ENCODE measurements at regions of chr20 and their contacts with region 1.

Region 1: GRCh38 chr20:47648943-47649342 is 136.3 kb downstream of the SULF2 start:
- DNase-seq: no peak
- ATAC-seq: no peak
- H3K4me3 Mint-ChIP-seq: no peak overlapping the region
- H3K27ac Mint-ChIP-seq: peak overlapping the region; percentile 46
- H3K4me1 Mint-ChIP-seq: no peaks in the 10 kb centered on the region
- H3K27me3 Mint-ChIP-seq: no peaks in the 10 kb centered on the region
- CTCF ChIP-seq: no peak

Region 2: DNA sequence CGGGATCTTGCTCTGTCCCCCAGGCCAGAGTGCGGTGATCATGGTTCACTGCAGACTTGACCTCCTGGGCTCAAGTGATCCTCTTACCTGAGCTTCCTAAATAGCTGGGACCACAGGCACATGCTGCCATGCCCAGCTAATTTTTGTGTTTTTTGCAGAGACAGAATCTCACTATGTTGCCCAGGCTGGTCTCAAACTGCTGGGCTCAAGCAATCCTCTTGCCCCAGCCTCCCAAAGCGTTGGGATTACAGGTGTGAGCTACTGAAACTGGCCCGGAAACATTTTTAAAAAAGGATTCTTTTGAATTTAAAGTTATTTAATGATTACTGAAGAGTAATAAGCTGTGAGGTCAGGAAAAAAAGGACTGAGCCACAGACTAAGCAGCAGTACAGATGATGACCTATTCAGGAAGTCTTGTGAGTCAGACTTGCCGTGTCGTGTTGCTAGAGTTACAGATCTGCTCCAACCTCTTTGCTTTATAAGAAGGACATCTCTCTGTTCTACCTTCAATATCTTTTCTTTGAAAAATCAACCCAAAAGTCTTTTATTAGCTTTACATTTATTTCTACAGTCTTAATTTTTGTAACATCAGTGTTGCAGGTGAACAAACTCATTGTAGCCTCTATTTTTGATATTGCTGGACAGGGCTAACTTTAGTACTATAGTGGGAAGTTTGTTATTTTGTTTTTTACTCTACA is 38.5 kb before region 1 on chr20:
- CTCF ChIA-PET with region 1: no interaction called
- POLR2A ChIA-PET with region 1: no interaction called
- intact Hi-C with region 1: no loop called
- DNase-seq: peak; percentile 99
- ATAC-seq: peak; percentile 88
- H3K4me3 Mint-ChIP-seq: peak overlapping the region; percentile 68
- H3K27ac Mint-ChIP-seq: peak overlapping the region; percentile 96
- H3K4me1 Mint-ChIP-seq: peaks cover 86% of the 10 kb centered on the region
- H3K27me3 Mint-ChIP-seq: no peaks in the 10 kb centered on the region
- CTCF ChIP-seq: no peak

Region 3: DNA sequence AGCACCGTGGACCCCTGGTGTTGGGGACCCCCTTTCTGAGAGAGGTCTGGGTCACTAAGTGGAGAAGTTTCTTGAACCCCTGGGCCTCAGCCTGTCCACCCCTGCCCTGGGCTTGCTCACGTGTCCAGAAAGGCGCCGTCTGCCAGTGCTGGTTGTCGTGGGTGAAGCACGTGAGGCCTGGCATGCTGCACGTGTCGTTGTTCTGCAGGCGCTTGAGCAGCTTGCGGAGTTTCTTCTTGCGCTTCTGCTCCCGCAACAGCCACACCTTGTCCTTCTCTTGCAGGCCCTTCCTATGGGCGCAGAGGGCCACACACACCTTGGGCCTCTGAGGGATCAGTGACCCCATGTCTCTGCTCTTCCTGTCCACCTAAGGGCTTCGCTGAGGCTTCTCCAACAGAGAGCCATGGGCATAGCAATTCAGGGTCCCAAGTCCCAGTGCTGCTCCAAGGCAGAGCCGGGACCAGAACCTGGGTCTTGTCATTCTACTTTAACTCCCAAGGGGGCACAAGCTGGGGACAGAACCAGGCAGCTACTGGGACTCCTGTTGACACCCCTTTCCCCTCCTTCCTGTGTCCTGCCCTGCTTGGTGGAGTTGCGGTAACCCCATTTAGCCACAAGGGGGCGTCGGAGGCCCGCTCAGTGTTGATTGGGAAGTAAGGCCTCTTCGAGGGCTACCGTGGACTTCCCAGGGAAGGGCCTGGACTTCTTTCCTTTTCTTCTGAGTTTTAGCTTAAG is 14.6 kb after region 1 on chr20:
- CTCF ChIA-PET with region 1: interaction called, 18 read pairs
- POLR2A ChIA-PET with region 1: interaction called, 4 read pairs
- intact Hi-C with region 1: no loop called
- DNase-seq: peak; percentile 82
- ATAC-seq: peak; percentile 89
- H3K4me3 Mint-ChIP-seq: no peak overlapping the region
- H3K27ac Mint-ChIP-seq: no peak overlapping the region
- H3K4me1 Mint-ChIP-seq: peaks cover 5% of the 10 kb centered on the region
- H3K27me3 Mint-ChIP-seq: no peaks in the 10 kb centered on the region
- CTCF ChIP-seq: peak; percentile 88